CD14-positive monocyte (primary cell): ENCODE measurements at regions of chr2 and their contacts with region 1.

Region 1: DNA sequence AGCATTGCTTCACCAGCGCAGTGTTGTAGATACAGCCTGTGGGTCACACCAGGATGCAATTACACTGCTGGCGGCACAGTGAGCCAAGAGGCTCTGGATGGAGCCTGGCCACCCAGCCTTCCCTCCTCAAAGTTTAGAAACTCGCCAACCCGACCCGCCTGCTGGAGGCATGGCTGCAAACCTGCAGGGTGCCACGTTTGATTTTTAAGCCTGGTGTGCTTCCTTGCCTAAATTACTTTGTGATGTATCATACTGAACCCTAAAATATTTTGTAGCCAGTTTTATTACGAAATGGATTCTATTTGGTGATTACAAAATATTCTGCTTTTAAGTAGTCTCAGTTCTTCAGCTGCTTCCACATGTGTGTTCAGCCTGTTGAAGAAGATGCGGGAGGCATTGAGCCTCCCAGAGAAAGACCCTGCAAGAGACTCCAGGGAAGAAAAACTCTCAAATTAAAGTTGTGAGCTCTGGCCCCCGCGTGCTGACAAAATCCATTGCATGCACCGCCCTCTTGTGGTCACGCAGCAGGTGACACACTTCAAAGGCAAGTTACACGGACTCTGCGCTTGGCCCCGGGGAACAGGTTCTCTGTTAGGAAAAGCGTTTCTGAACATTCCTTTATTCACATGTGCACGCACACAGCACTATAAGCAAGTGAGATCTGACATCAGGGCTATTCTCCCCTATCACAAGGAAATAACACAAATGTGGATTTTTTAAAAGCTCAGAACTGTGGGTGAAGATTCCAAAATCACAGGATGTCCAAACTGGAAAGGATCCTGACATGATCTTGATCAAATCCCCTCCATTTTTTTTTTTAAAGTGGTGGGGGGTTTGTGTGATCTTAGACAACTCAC is 63.0 kb upstream of the TWIST2 start:
- DNase-seq: peak; percentile 12 to 47 (median 21)
- H3K4me3 ChIP-seq: no peak overlapping the region
- H3K4me3 Mint-ChIP-seq: no peak overlapping the region
- H3K27ac ChIP-seq: no peak overlapping the region
- H3K27ac Mint-ChIP-seq: no peak overlapping the region
- H3K4me1 ChIP-seq: no peaks in the 10 kb centered on the region
- H3K4me1 Mint-ChIP-seq: peaks cover 6% of the 10 kb centered on the region
- H3K27me3 ChIP-seq: no peaks in the 10 kb centered on the region
- H3K27me3 Mint-ChIP-seq: peaks cover 0 to 7% (median 1%) of the 10 kb centered on the region in 3 donors
- CTCF ChIP-seq: peak; percentile 88

Region 2: DNA sequence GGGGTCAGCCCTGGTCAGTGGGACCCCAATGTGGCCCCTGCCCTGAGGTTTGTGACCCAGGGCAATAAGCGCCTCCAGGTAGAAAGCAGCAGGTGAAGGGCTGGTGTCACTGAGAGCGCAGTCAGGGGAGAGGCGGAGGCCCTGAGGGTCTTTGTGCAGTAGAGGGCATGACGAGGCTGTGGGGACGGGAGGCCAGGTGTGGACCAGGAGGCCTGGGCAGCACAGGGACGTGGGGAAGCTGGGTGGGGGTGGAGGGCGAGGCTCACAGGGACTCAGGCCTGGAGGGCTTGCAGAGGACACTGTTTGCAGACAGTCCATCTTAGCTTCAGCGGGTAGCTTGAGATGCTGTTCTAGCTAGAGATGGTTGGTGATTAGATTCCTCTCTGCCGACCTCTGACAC is 432.5 kb before region 1 on chr2:
- intact Hi-C with region 1: loop called in 1 of 2 experiments (anchors 10 kb)
- DNase-seq: no peak
- H3K4me3 ChIP-seq: no peak overlapping the region
- H3K4me3 Mint-ChIP-seq: no peak overlapping the region
- H3K27ac ChIP-seq: no peak overlapping the region
- H3K27ac Mint-ChIP-seq: no peak overlapping the region
- H3K4me1 ChIP-seq: no peaks in the 10 kb centered on the region
- H3K4me1 Mint-ChIP-seq: peaks cover under 1% of the 10 kb centered on the region
- H3K27me3 ChIP-seq: no peaks in the 10 kb centered on the region
- H3K27me3 Mint-ChIP-seq: no peaks in the 10 kb centered on the region
- CTCF ChIP-seq: no peak

Region 3: GRCh38 chr2:238720232-238720672 is 64.6 kb before region 1 on chr2:
- intact Hi-C with region 1: loop called (anchors 5 kb)
- DNase-seq: peak; percentile 20 to 47 (median 42)
- H3K4me3 ChIP-seq: no peak overlapping the region
- H3K4me3 Mint-ChIP-seq: no peak overlapping the region
- H3K27ac ChIP-seq: no peak overlapping the region
- H3K27ac Mint-ChIP-seq: no peak overlapping the region
- H3K4me1 ChIP-seq: no peaks in the 10 kb centered on the region
- H3K4me1 Mint-ChIP-seq: peaks cover 2% of the 10 kb centered on the region
- H3K27me3 ChIP-seq: peaks cover 2 to 7% of the 10 kb centered on the region in 2 donors
- H3K27me3 Mint-ChIP-seq: peaks cover 4 to 25% (median 17%) of the 10 kb centered on the region in 3 donors
- CTCF ChIP-seq: peak; percentile 93

Region 4: GRCh38 chr2:238821391-238821790 is 36.5 kb after region 1 on chr2:
- intact Hi-C with region 1: no loop called
- DNase-seq: no peak
- H3K4me3 ChIP-seq: no peak overlapping the region
- H3K4me3 Mint-ChIP-seq: no peak overlapping the region
- H3K27ac ChIP-seq: no peak overlapping the region
- H3K27ac Mint-ChIP-seq: peak overlapping the region in 1 of 7 donors; percentile 46
- H3K4me1 ChIP-seq: no peaks in the 10 kb centered on the region
- H3K4me1 Mint-ChIP-seq: no peaks in the 10 kb centered on the region
- H3K27me3 ChIP-seq: peaks cover 0 to 3% of the 10 kb centered on the region in 2 donors
- H3K27me3 Mint-ChIP-seq: peaks cover 4 to 9% (median 6%) of the 10 kb centered on the region in 3 donors
- CTCF ChIP-seq: no peak